ENCODE measurements at regions of chr15 and their contacts with region 1.

Region 1: GRCh38 chr15:48963524-48964113 is at the start of gene SHC4:
- DNase-seq: peak; percentile 42 to 61 (median 54)
- ATAC-seq: peak; percentile 60
- H3K4me3 ChIP-seq: peak within 1 kb of the TSS; percentile 16; the same call in 1 of the 2 replicates
- H3K27ac ChIP-seq: no peak within 1 kb of the TSS
- H3K4me1 ChIP-seq: peaks cover 4 to 12% of the 10 kb centered on the region in 2 experiments; a peak in 4 of 5 replicates
- H3K27me3 ChIP-seq: peaks cover 29 to 44% of the 10 kb centered on the region in 2 experiments
- CTCF ChIP-seq: peak in 2 of 3 experiments; percentile 26 to 27; a peak in 2 of 6 replicates
- EP300 ChIP-seq: no peak
- POLR2A ChIP-seq: no peak
- RAD21 ChIP-seq: peak in 1 of 2 experiments; percentile 21; a peak in 1 of 4 replicates
- polyA plus RNA-seq, gene SHC4: 0.67 to 1.0 TPM

Region 2: DNA sequence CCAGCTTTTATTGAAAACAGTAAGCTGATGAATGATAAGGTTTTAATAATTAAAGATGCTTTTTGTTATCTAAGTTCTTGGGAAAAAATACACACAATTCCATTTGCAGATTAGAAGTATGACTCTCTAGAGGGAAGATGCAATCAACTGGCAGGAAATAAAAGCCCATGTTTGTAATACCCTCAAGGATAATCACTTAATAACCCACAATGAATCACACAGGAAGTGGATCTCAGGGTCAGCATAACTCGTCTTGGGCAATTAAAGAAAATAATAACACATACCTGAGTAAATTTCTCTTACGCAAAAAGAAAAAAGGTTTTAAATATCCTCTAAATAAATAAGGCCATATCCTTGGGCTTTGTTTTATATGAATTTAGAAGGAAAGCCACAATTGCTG is 95.1 kb before region 1 on chr15:
- CTCF ChIA-PET with region 1: no interaction called
- POLR2A ChIA-PET with region 1: no interaction called
- in situ Hi-C with region 1: loop called (anchors 5 kb)
- intact Hi-C with region 1: no loop called
- DNase-seq: no peak
- ATAC-seq: no peak
- H3K4me3 ChIP-seq: no peak overlapping the region
- H3K27ac ChIP-seq: no peak overlapping the region
- H3K4me1 ChIP-seq: no peaks in the 10 kb centered on the region
- H3K27me3 ChIP-seq: no peaks in the 10 kb centered on the region
- CTCF ChIP-seq: no peak
- EP300 ChIP-seq: no peak
- POLR2A ChIP-seq: no peak
- RAD21 ChIP-seq: no peak

Region 3: DNA sequence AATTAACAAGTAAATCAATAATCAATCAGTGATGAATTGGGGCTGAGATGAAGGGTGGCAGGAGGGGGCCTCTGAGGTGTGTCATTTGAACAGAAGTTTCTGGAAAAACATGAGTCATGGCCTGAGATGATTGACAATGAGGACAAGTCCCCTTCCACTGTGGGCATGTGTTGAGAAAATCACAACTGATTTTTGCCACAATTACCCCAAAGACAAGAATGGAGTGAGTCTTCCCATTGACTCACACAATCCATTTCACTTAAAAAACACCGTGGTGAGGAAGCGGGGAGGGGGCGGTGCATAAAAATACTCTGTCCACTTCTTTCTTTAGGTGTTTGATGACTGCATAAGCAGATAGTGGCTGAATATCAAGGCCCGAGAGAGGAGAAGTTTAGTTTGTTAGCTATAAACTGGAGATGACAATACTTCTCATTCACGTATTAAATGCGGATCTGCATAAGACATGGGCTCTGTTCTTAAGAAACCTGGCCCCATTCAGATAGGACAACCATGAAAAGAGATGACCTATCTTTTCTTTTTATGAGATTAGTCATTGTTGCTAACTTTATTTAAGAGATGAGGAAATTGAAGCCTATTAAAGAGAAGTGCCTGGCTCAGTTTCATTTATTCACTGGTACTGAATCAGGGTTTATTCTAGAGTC is 34.6 kb before region 1 on chr15:
- CTCF ChIA-PET with region 1: no interaction called
- POLR2A ChIA-PET with region 1: no interaction called
- in situ Hi-C with region 1: no loop called
- intact Hi-C with region 1: no loop called
- DNase-seq: peak in 1 of 4 experiments; percentile 37
- ATAC-seq: no peak
- H3K4me3 ChIP-seq: no peak overlapping the region
- H3K27ac ChIP-seq: no peak overlapping the region
- H3K4me1 ChIP-seq: peaks cover 0 to 26% of the 10 kb centered on the region in 2 experiments; a peak in 3 of 5 replicates
- H3K27me3 ChIP-seq: peaks cover 0 to 3% of the 10 kb centered on the region in 2 experiments; a peak in 2 of 5 replicates
- CTCF ChIP-seq: no peak
- EP300 ChIP-seq: no peak
- POLR2A ChIP-seq: no peak
- RAD21 ChIP-seq: no peak

Region 4: DNA sequence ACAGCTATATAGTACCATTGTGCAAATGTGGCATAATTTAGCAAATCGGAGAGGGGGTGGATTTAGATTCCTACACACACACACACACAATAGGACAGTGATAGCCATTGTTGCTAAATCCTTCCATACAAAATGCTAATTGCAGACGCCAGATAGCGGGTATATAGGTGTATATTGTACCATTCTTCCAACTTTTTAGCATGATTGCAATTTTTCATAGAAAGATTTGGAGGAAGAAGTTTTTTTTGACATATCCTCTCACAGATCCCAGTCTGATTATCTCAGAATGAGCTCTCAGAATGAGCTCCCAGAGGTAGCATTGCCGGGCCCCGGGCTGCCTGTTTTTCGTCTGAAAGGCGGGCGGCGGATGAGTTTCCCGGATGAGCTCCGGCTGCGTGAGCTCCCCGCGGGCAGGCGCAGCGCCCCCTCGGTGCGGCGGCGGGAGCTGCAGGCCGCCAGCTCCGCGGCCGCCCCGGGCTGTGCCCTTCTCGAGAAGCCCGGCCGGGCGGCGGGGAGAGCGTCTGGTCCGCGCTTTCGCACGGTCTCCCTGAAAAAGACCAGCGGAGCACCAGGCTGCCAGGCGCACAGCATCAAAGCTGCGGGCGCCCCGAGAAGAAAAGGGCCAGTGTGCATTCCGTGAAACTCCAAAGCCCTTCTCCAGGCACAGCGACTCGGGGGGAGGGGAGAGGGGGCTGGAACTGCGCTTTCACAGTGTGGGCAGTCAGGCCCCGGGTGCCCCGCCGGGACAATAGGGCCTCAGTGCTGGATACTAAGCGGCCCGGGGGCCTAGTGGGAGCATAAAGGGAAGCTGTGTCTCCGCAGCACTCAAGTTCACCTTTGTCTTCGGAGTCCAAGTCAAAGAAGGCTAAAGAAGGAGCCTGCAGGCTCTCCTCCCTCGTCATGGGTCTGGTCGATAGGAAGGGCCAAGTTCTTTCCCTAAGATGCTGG is 12.1 kb after region 1 on chr15:
- CTCF ChIA-PET with region 1: no interaction called
- POLR2A ChIA-PET with region 1: interaction called, 12 read pairs
- in situ Hi-C with region 1: no loop called
- intact Hi-C with region 1: no loop called
- DNase-seq: peak; percentile 81 to 89 (median 84)
- ATAC-seq: peak; percentile 97
- H3K4me3 ChIP-seq: peak overlapping the region; percentile 45
- H3K27ac ChIP-seq: peak overlapping the region; percentile 59
- H3K4me1 ChIP-seq: peaks cover 12 to 18% of the 10 kb centered on the region in 2 experiments; a peak in 3 of 5 replicates
- H3K27me3 ChIP-seq: no peaks in the 10 kb centered on the region
- CTCF ChIP-seq: peak; percentile 81 to 92 (median 86)
- EP300 ChIP-seq: no peak
- POLR2A ChIP-seq: peak; percentile 59; the same call in 1 of the 2 replicates
- RAD21 ChIP-seq: peak; percentile 52 to 62